ENCODE measurements at regions of chr11 and their contacts with region 1.

Region 1: GRCh38 chr11:96459751-96460150 is 69.9 kb downstream of the JRKL start:
- DNase-seq: no peak
- ATAC-seq: no peak
- H3K4me3 ChIP-seq: no peak overlapping the region
- H3K27ac ChIP-seq: no peak overlapping the region
- H3K4me1 ChIP-seq: peaks cover 0 to 9% (median 6%) of the 10 kb centered on the region in 9 donors
- H3K27me3 ChIP-seq: peaks cover 0 to 5% (median 0%) of the 10 kb centered on the region in 7 donors
- CTCF ChIP-seq: no peak

Region 2: DNA sequence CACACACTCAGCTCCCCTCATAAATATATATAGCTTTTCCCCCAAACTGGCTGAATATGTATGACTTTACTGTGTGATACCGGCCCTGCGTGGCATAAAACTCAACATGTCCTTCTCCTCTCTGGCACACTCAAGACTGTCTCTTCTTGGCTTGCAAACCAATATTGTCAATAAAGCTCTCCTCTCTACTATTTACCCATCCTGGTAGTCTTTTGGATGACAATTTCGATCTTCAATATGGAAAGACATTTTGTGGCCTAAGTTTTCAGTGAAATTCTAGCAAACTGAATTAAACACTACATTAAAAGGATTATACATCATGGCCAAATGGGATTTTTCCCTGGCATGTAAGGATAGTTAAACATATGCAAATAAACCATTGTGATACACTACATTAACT is 1186.0 kb after region 1 on chr11:
- intact Hi-C with region 1: loop called in 1 of 10 experiments (anchors 10 kb)
- DNase-seq: no peak
- ATAC-seq: no peak
- H3K4me3 ChIP-seq: no peak overlapping the region
- H3K27ac ChIP-seq: no peak overlapping the region
- H3K4me1 ChIP-seq: no peaks in the 10 kb centered on the region
- H3K27me3 ChIP-seq: no peaks in the 10 kb centered on the region
- CTCF ChIP-seq: no peak